ENCODE measurements at regions of chr6 and their contacts with region 1.

Region 1: GRCh38 chr6:127539272-127539671 is 20.1 kb upstream of the MTCL3 start:
- DNase-seq: no peak

Region 2: GRCh38 chr6:127302728-127303660 is 236.3 kb before region 1 on chr6:
- intact Hi-C with region 1: loop called (anchors 1 kb)
- DNase-seq: peak in 2 of 10 donors; percentile 15 to 17